ENCODE measurements at regions of chr18 and their contacts with region 1.

Region 1: DNA sequence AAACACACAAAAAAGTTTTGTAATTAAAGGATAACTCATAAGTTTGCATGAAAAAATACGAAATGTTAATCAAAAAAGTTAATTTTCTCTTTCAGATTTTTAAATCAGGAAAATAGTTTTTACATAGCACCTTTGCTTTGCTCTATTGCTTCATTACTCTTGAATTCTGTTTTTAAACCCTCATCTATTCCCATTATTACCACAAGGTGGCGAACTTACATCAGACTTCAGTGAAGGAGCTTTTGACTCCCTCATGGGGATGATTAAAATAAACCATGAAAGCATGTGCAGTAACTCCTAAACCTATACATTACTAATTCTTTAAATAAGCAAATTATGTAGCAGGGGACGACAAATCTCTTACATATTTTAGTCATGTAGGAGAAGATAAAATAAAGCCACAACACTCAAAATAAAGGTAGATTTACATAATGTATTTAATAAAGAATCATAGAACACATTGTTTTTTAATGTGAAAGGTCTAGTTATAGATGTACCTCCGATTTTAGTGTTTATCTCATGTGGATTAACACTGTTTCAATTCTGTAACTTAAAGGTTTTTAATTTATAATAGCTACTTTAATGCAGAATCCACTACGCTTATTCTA is 105.2 kb downstream of the NETO1 start:
- DNase-seq: peak; percentile 2 to 63
- H3K4me3 ChIP-seq: no peak overlapping the region
- H3K27ac ChIP-seq: no peak overlapping the region
- H3K4me1 ChIP-seq: peaks cover 4% of the 10 kb centered on the region; the same call in 1 of the 2 replicates
- H3K27me3 ChIP-seq: no peaks in the 10 kb centered on the region
- CTCF ChIP-seq: peak; percentile 96

Region 2: DNA sequence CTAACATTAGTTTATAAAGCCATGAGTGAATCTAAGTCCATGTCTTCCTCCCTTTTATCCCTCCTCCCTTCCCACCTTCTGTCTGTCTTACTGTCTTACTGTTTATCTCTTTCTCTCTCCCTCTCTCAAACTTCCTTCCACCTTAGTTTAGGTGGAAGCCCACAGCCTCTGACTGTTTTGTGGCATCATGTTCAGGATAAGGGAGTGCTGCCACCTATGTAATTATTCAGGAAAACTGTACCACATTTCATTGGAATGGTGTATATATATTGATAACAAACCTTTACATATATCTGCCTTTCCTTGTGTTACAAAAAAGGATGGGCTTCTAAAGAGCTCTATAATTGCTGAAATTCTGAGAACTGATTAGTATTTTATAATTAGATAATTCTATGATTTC is 56.4 kb after region 1 on chr18:
- CTCF ChIA-PET with region 1: no interaction called
- POLR2A ChIA-PET with region 1: no interaction called
- intact Hi-C with region 1: no loop called
- DNase-seq: no peak
- H3K4me3 ChIP-seq: no peak overlapping the region
- H3K27ac ChIP-seq: no peak overlapping the region
- H3K4me1 ChIP-seq: no peaks in the 10 kb centered on the region
- H3K27me3 ChIP-seq: no peaks in the 10 kb centered on the region
- CTCF ChIP-seq: no peak

Region 3: DNA sequence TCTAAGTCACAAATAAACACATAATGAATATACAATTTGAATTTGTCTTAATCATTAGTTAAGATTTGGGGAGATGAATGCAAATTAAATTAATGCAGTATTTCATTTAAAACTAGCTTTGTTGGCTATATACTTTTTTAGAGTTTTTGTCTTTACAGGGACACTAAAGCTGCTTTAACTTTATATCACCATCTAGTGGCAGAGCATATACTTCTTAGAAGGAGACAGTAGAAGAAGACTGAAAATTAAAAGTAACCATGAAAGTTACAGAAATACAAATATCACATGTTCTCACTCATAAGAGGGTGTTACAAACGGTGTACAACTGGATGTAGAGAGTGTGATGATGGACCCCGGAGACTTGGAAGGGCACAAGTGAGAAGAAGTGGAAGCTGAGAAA is 373.5 kb after region 1 on chr18:
- CTCF ChIA-PET with region 1: interaction called, 5 read pairs
- POLR2A ChIA-PET with region 1: no interaction called
- intact Hi-C with region 1: loop called (anchors 1 kb)
- DNase-seq: peak in 1 of 2 experiments; percentile 41
- H3K4me3 ChIP-seq: no peak overlapping the region
- H3K27ac ChIP-seq: no peak overlapping the region
- H3K4me1 ChIP-seq: no peaks in the 10 kb centered on the region
- H3K27me3 ChIP-seq: no peaks in the 10 kb centered on the region
- CTCF ChIP-seq: peak; percentile 75

Region 4: DNA sequence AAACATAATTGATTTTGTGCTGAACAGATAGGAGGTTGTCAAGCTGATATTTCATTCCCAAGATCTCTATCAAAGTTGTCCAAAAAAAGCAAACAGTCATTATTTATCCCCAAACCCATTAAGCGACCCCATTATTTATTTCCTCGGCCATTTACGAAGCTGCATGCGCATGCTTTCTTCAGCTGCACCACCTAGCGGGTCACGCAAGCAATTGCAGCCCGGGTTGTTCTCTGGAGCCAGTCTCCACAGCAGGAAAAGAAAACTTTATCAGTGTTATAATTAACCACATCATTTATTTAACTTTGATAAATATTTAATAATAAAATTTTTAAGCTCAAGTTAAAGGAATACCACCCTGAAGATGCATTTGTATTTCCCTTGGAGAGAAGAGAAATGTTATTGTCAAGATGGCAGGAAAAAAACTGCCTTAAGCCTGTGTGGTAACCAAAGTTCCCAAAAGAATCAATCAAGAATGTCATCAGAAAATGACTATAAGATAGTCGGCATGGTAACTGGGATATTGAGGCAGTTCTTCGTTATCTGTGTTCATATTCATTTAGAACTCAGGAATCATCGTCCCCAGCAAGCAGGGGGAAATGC is 1080.3 kb after region 1 on chr18:
- CTCF ChIA-PET with region 1: no interaction called
- POLR2A ChIA-PET with region 1: no interaction called
- intact Hi-C with region 1: loop called (anchors 1 kb)
- DNase-seq: peak in 1 of 2 experiments; percentile 31
- H3K4me3 ChIP-seq: peak overlapping the region; percentile 37; the same call in 1 of the 2 replicates
- H3K27ac ChIP-seq: no peak overlapping the region
- H3K4me1 ChIP-seq: peaks cover 22% of the 10 kb centered on the region
- H3K27me3 ChIP-seq: no peaks in the 10 kb centered on the region
- CTCF ChIP-seq: peak; percentile 99

Region 5: DNA sequence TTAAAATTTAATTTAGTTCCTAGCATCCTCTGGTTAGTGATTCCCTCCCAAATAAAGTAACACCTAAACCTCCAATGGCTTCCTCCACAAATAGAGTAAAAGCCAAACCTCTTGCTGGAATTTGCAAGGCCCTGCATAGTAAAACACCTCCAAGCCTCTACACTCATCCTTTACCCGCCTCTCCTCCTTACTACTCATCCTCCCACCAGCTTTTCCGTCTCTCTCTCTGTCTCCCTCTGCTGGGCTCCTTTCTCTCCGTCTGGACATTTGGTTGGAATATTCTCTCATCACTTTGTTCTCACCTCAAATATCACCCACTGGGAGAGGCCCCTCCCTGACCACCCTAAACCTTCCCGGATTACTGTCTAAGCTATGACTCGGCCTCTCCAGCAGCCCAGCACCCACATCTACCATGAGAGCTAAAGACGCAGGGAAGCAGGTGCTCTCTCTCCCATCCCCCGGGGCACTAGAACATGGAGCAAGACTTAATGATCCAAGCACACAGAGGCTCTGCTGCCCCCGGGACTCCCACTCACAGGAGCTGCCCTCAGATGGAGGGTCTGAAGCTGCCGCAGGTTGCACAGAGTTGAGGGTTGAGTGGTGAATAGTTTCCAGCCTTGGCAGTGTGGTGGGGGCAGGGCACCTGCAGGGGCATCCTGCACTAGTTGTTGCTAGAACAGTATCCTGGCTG is 1217.8 kb after region 1 on chr18:
- CTCF ChIA-PET with region 1: no interaction called
- POLR2A ChIA-PET with region 1: no interaction called
- intact Hi-C with region 1: loop called (anchors 5 kb)
- DNase-seq: peak in 1 of 2 experiments; percentile 45
- H3K4me3 ChIP-seq: no peak overlapping the region
- H3K27ac ChIP-seq: no peak overlapping the region
- H3K4me1 ChIP-seq: no peaks in the 10 kb centered on the region
- H3K27me3 ChIP-seq: no peaks in the 10 kb centered on the region
- CTCF ChIP-seq: peak; percentile 81

Region 6: DNA sequence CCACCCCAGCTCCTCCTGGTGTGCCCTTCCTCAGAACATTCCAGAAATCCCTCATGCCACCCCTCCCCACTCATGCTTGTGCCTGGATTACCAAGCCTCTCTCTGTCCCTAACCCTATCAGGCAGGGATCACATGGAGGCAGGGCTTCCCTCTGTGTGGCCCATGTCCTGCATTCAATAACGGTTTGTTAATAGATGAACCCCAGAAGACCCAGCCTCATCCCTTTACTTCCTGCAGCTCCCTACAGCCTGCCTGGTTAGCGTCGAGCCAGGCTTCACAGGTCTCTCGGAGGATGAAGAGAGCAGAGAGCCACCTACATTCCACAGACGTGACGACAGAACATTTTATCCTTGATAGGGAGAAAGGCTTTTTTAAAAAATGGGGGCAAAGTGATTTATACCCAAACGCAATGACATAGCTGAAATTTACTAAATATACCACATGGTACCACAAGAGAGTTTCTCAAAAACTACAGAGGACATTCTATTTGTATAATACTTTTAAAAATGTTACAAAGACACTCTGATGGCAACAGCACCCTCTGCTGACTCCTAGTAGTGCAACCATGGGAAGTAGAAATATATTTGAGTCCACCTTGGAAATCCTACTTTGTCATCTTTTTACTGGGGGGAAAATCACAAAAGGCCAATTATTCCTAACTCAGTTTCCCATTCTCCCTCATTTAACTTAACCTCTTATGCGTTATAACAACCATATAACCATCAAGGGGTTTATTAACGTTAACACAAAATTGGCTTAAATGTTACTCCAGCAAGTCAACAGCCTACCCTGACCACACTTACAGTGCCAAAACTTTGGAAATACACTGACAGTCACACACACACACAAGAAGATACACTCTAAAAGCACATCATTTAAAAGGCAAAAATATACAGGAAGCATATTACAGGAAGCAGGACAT is 1354.3 kb after region 1 on chr18:
- CTCF ChIA-PET with region 1: no interaction called
- POLR2A ChIA-PET with region 1: no interaction called
- intact Hi-C with region 1: loop called (anchors 10 kb)
- DNase-seq: no peak
- H3K4me3 ChIP-seq: no peak overlapping the region
- H3K27ac ChIP-seq: no peak overlapping the region
- H3K4me1 ChIP-seq: no peaks in the 10 kb centered on the region
- H3K27me3 ChIP-seq: no peaks in the 10 kb centered on the region; the same call in 1 of the 2 replicates
- CTCF ChIP-seq: peak; percentile 86

Region 7: GRCh38 chr18:74342416-74343043 is 1579.9 kb after region 1 on chr18:
- CTCF ChIA-PET with region 1: no interaction called
- POLR2A ChIA-PET with region 1: no interaction called
- intact Hi-C with region 1: loop called (anchors 1 kb)
- DNase-seq: peak; percentile 12 to 58
- H3K4me3 ChIP-seq: no peak overlapping the region
- H3K27ac ChIP-seq: no peak overlapping the region
- H3K4me1 ChIP-seq: no peaks in the 10 kb centered on the region
- H3K27me3 ChIP-seq: no peaks in the 10 kb centered on the region
- CTCF ChIP-seq: peak; percentile 92